ENCODE measurements at regions of chr1 and their contacts with region 1.

Region 1: GRCh38 chr1:15598436-15598835 is 13.6 kb upstream of the AGMAT start:
- DNase-seq: no peak
- CTCF ChIP-seq: no peak

Region 2: GRCh38 chr1:14850566-14850965 is 747.9 kb before region 1 on chr1:
- in situ Hi-C with region 1: no loop called
- DNase-seq: peak; percentile 32
- CTCF ChIP-seq: no peak

Region 3: GRCh38 chr1:15714406-15715136 is 116.1 kb after region 1 on chr1:
- in situ Hi-C with region 1: loop called (anchors 10 kb)
- DNase-seq: no peak
- CTCF ChIP-seq: no peak

Measured in GM13977 (cell line).